Endothelial cell of umbilical vein (primary cell): ENCODE measurements at regions of chr11 and their contacts with region 1.

Region 1: DNA sequence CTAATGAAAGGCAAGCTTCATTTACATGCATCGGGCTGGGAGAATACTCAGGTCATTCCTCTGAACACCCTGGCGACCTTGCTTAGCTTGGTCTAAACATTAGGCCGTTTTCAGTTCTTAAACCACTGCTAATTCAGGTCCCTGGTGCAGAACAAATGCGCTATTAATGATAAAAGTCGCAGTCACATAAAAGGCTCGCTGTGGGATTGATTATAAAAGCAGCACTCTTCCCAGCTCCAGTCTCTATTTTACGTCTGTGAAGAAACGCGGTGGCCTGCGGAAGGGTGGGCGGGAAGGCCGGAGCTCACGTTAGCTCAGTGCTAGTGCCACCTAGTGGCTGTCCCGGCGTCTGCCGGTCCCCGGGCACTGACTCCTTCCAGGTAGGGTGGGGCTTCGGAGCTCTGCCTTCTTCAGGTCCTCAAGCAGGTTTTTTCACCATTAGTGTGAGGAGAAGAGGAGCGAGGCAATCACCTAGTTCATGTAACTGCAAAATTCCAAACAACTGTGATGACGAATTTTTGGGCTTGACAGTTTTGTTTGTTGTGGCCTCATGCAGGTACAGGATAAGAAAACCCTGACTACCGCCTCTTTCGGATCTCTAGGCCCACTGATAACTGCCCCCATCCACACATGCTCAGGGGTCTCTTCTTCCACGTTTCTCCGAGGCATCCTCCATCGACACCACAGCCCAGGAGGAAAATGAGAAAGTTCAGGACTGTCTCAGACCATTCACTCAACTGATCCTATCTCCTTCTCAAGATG is 66.5 kb upstream of the CLMP start:
- DNase-seq: peak; percentile 68
- H3K4me3 ChIP-seq: peak overlapping the region in 1 of 3 experiments; percentile 38
- H3K27ac ChIP-seq: no peak overlapping the region
- H3K4me1 ChIP-seq: no peaks in the 10 kb centered on the region
- H3K27me3 ChIP-seq: peaks cover 4 to 5% of the 10 kb centered on the region in 2 experiments
- CTCF ChIP-seq: peak; percentile 94 to 98
- POLR2A ChIP-seq: no peak

Region 2: GRCh38 chr11:123110356-123110755 is 151.2 kb before region 1 on chr11:
- CTCF ChIA-PET with region 1: interaction called, 260 read pairs
- POLR2A ChIA-PET with region 1: no interaction called
- dilution Hi-C with region 1: loop called (anchors 25 kb)
- intact Hi-C with region 1: loop called (anchors 1 kb)
- DNase-seq: no peak
- H3K4me3 ChIP-seq: no peak overlapping the region
- H3K27ac ChIP-seq: no peak overlapping the region
- H3K4me1 ChIP-seq: no peaks in the 10 kb centered on the region
- H3K27me3 ChIP-seq: no peaks in the 10 kb centered on the region
- CTCF ChIP-seq: no peak
- POLR2A ChIP-seq: no peak

Region 3: DNA sequence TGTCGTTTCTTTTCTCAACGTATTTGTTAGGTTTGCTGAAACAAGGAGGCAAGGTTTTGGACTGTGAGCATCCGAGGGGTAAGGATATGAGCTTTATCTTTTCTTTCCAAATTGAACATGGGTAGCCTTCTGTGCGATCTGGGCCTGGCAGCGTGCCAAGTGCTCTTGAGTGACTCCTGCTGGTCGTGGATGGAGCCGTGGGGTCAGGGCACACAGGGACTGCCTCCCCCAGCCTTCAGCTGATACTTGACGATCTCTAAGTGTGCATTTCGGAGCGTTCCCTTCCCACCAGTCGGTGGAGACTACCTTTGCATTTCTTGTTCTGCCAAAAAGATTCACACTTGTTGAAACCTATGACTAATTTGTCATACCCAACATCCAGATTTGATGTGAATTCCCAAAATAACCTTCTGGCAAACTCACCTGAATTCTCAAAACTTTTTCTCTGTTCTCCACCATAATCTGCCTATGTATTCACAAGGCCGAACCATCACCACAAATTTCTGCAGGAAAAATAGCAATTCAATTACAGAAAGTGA is 26.3 kb before region 1 on chr11:
- CTCF ChIA-PET with region 1: interaction called, 13 read pairs
- POLR2A ChIA-PET with region 1: no interaction called
- dilution Hi-C with region 1: no loop called
- intact Hi-C with region 1: no loop called
- DNase-seq: peak; percentile 41
- H3K4me3 ChIP-seq: no peak overlapping the region
- H3K27ac ChIP-seq: no peak overlapping the region
- H3K4me1 ChIP-seq: no peaks in the 10 kb centered on the region
- H3K27me3 ChIP-seq: no peaks in the 10 kb centered on the region
- CTCF ChIP-seq: peak; percentile 64 to 68
- POLR2A ChIP-seq: no peak

Region 4: GRCh38 chr11:123301696-123302400 is 40.3 kb after region 1 on chr11:
- CTCF ChIA-PET with region 1: interaction called, 13 read pairs
- POLR2A ChIA-PET with region 1: no interaction called
- dilution Hi-C with region 1: no loop called
- intact Hi-C with region 1: no loop called
- DNase-seq: peak; percentile 43
- H3K4me3 ChIP-seq: peak overlapping the region in 2 of 3 experiments; percentile 15 to 29
- H3K27ac ChIP-seq: no peak overlapping the region
- H3K4me1 ChIP-seq: peaks cover 17% of the 10 kb centered on the region
- H3K27me3 ChIP-seq: peaks cover 4 to 6% of the 10 kb centered on the region in 2 experiments
- CTCF ChIP-seq: peak; percentile 81 to 84
- POLR2A ChIP-seq: no peak

Region 5: DNA sequence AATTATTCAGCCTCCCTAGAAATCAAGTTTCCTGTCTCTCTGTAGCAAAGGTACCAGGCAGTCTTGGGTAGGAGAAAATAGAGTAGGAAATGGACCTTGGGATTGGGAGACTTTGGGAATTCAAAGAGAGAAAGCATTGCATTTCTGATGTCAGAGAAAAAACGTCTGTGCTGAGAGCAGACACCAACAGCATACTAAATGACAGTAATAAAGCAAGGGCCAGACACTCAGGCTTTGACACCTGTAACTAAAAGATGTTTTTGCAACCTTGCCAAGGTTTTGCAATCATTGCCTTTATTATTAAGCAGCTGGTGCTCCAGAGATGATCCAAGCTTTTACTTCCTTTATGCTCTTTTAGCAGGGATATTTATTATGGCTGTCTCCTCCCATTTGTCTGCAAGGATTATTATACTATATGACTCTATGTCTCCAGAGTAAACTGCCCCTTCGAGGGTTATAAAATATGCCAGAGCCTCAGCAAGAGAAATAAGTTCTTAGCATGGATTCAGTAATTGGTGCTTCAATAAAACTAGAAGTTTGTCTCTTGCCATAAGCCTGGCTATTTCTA is 83.3 kb after region 1 on chr11:
- CTCF ChIA-PET with region 1: no interaction called
- POLR2A ChIA-PET with region 1: no interaction called
- dilution Hi-C with region 1: no loop called
- intact Hi-C with region 1: no loop called
- DNase-seq: no peak
- H3K4me3 ChIP-seq: no peak overlapping the region
- H3K27ac ChIP-seq: no peak overlapping the region
- H3K4me1 ChIP-seq: no peaks in the 10 kb centered on the region
- H3K27me3 ChIP-seq: no peaks in the 10 kb centered on the region
- CTCF ChIP-seq: no peak
- POLR2A ChIP-seq: no peak

Region 6: DNA sequence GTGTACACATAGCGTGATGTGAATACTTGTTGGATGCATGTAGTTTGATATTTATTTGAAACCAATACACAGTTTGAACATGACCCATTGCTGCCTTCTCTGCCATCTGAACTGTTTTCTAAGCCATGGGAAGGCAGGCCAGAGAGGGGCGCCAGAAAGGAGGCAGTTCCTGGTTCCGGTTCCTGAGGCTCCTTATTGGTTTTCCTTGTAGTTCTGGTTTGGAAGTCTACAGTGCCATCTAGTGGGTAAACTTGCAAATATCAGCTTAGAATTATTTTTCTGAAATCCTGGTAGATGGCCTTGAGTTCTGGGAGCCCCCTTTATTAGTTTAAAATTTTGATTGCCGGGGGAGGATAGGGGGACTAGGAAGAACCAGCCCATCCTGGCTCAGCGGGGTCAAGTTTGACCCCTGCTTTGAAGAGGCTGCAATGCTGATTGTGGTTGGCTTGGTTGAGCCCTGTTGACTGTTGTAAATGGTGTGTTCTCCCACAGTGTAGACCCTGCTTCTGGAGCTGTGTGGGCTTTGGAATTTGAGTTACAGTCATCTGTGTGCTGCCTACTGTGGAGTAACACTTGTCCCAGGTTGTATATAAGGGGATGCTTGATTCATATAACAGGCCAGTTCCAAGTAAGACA is 216.9 kb after region 1 on chr11:
- CTCF ChIA-PET with region 1: interaction called, 44 read pairs
- POLR2A ChIA-PET with region 1: no interaction called
- dilution Hi-C with region 1: no loop called
- intact Hi-C with region 1: loop called (anchors 1 kb)
- DNase-seq: peak; percentile 76
- H3K4me3 ChIP-seq: no peak overlapping the region
- H3K27ac ChIP-seq: no peak overlapping the region
- H3K4me1 ChIP-seq: peaks cover 25% of the 10 kb centered on the region
- H3K27me3 ChIP-seq: no peaks in the 10 kb centered on the region
- CTCF ChIP-seq: peak; percentile 54 to 58
- POLR2A ChIP-seq: no peak